ENCODE measurements at regions of chr6 and their contacts with region 1.

Region 1: DNA sequence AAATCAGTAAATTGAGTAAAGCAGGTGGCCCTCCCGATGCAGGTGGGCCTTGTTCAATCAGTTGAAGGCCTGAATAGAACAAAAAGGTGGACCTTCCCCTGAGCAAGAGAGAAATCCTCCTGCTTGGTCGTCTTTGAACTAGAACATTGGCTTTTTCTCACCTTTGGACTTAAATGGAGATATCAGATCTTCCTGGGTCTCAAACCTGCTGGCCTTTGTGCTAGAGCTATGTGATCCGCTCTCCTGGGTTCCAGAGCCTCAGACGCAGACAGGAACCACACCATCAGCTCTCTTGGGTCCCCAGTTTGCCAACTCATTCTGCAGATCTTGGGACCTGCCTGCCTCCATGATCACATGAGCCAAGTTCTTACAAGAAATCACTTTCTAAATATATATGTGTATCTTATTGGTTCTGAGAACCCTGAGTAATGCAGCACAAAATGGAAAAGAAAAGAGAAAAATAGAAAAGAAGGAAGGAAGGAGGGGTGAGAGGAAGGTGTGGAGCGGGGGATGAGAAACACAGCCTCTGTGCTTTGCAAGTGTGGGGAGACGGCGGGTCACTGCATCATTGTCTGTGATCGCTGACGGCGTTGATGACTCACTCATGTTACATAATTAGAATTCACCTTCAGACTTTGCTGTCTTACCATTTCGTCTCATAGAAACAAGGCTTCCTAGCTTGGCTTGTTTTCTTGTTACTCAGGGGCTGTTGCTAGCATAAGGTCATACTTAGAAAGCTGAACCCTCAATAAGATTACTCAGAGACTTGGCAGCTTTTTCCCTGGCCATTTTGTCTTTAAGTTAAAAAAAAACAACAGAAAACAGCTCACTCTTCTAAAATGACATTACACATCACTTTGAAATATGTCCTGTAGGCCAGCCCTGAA is 85.7 kb upstream of the NEDD9 start:
- DNase-seq: peak; percentile 74 to 77
- H3K4me3 ChIP-seq: no peak overlapping the region
- H3K4me3 Mint-ChIP-seq: peak overlapping the region; percentile 30
- H3K27ac Mint-ChIP-seq: peak overlapping the region; percentile 65
- H3K4me1 ChIP-seq: peaks cover 31% of the 10 kb centered on the region
- H3K4me1 Mint-ChIP-seq: peaks cover 40% of the 10 kb centered on the region
- H3K27me3 ChIP-seq: no peaks in the 10 kb centered on the region
- H3K27me3 Mint-ChIP-seq: no peaks in the 10 kb centered on the region
- CTCF ChIP-seq: no peak

Region 2: DNA sequence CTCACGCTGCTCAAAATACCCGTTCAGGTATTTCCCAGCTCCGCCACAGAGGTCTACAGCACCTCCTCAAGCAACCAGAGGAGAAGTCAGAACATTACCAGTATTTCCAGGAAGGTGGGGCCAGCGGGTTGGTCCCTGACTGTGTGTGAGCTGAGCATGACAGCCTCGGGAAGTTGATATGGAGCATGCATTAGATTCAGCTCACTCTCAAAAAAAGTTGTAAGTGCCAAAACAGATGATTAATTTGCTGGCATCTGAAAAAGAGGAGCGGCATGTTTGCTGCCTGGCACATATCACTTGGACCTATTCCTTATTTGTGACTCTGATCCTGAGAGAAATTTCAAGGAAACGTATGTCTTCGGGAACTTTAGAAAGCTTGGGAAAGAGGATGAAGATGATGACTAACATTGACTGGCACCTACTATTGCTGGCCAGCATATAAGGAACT is 306.3 kb before region 1 on chr6:
- CTCF ChIA-PET with region 1: no interaction called
- POLR2A ChIA-PET with region 1: no interaction called
- intact Hi-C with region 1: no loop called
- DNase-seq: peak; percentile 72 to 73
- H3K4me3 ChIP-seq: no peak overlapping the region
- H3K4me3 Mint-ChIP-seq: peak overlapping the region; percentile 51
- H3K27ac Mint-ChIP-seq: no peak overlapping the region
- H3K4me1 ChIP-seq: peaks cover 58% of the 10 kb centered on the region
- H3K4me1 Mint-ChIP-seq: peaks cover 53% of the 10 kb centered on the region
- H3K27me3 ChIP-seq: no peaks in the 10 kb centered on the region
- H3K27me3 Mint-ChIP-seq: no peaks in the 10 kb centered on the region
- CTCF ChIP-seq: peak in 1 of 2 experiments; percentile 47

Region 3: DNA sequence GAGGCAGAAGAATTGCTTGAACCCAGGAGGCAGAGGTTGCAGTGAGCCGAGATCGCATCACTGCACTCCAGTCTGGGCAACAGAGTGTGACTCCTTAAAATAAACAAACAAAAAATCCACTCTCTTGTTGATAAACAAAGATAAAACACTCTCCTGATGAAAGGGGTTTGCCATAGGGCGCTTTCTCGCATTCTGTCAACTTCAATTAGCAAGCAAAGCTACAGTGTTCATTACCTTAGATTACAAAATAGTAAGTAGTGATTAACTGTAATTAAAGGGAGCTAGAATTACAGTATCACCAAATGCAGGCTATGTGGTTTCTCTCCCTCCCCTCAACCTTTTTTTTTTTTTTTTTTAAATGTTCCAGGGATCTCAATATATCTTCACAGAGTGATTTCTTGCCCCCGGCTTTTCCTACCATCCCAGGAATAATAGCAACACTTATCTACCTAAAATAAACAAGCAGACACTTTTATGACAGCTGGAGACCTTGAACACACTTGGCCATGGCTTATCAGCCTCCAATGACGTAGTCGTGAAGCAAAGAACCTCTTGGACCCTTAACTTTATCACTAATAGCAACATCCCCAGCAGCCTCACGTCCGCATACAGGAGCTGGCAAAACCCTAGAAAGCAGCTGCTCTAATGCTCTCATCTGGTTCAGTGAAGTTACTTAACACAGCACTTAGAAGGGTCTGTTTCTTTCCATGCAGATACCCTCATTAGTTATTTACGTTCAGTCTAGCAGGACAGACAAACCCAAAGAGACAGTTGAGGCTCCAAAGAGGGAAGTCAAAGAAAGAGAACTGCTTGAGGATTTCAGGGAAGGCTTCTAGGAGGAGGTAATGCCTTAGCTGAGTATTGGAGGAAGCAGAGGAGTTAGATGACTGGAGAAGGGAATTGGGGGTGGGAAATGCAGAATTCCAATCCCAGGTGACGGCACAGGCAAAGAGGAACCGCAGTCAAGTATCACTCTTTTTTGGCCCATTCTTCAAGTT is 47.8 kb before region 1 on chr6:
- CTCF ChIA-PET with region 1: no interaction called
- POLR2A ChIA-PET with region 1: no interaction called
- intact Hi-C with region 1: loop called (anchors 2 kb)
- DNase-seq: peak; percentile 51 to 75
- H3K4me3 ChIP-seq: no peak overlapping the region
- H3K4me3 Mint-ChIP-seq: no peak overlapping the region
- H3K27ac Mint-ChIP-seq: peak overlapping the region; percentile 57
- H3K4me1 ChIP-seq: peaks cover 27% of the 10 kb centered on the region
- H3K4me1 Mint-ChIP-seq: peaks cover 17% of the 10 kb centered on the region
- H3K27me3 ChIP-seq: no peaks in the 10 kb centered on the region; the same call in 1 of the 2 replicates
- H3K27me3 Mint-ChIP-seq: no peaks in the 10 kb centered on the region
- CTCF ChIP-seq: no peak

Measured in Caco-2 (cell line).